Psoas muscle (tissue), 8 donors: ENCODE measurements at regions of chr22 and their contacts with region 1.

Region 1: DNA sequence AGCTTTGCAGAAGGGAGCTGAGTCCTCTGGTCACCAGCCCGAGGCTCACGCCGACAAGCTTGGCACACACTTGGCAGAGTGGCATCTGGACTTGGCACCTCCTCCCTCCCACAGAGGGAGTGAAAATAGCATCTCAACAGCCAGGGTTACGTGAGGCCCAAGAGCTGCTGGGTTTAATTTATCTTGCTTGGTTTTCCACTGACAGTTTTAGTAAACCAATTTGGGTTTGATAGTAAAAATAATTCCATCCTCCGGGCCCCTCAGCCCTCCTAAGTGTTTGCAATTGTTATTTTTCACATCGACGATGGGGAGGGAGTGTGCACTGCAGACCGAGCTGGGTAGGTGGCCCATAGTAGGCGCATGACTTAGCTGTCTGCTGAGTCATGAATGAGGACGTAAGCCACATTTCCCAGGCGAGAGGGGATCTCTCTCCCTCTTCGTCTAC is 107.6 kb upstream of the ASPHD2 start:
- DNase-seq: peak; percentile 49 to 90
- ATAC-seq: peak; percentile 86 to 89 (median 88)
- H3K4me3 ChIP-seq: no peak overlapping the region
- H3K27ac ChIP-seq: peak overlapping the region; percentile 91
- H3K4me1 ChIP-seq: peaks cover 14% of the 10 kb centered on the region
- H3K27me3 ChIP-seq: no peaks in the 10 kb centered on the region
- CTCF ChIP-seq: no peak

Region 2: DNA sequence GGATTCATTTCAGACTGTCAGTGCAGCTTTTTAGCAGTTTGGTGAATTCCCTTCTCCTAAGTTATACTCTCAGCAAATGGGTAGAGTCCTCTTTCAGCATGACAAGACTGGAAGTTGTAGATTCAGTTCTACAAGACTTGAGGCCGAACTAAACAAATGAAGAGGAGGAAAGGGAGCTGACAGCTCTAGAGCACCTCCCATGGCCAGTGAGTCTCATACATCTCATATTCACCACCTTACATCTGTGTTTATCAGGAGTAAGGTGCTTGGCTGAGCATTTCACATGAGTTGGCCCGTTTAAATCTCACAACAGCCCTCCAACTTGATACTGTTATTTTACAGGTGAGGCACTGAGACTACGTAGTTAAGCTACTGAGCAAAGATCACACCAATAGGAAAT is 121.8 kb before region 1 on chr22:
- intact Hi-C with region 1: loop called in 1 of 2 experiments (anchors 5 kb)
- DNase-seq: no peak
- ATAC-seq: no peak
- H3K4me3 ChIP-seq: no peak overlapping the region
- H3K27ac ChIP-seq: no peak overlapping the region
- H3K4me1 ChIP-seq: peaks cover 3% of the 10 kb centered on the region
- H3K27me3 ChIP-seq: no peaks in the 10 kb centered on the region
- CTCF ChIP-seq: no peak

Region 3: DNA sequence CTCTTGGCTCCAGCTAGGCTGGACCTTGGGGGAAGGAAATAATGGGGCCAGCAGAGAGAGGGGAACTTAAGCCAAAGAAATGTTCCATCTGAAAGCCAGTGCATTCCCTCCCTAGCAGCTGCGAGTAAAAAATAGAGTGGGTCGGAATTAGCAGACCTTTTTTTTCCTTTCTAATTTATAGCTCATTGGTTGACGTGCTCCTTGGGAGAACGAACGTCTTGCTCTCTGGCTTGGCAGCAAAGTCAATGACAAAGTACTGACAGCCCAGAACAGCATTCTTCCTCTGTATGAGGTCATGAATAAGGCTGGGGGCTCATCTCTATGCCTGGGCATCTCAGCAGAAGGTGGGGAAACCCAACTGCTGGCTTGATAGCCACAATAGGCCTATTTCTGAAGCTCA is 87.2 kb before region 1 on chr22:
- intact Hi-C with region 1: loop called (anchors 1 to 5 kb)
- DNase-seq: no peak
- ATAC-seq: peak; percentile 65 to 87 (median 78)
- H3K4me3 ChIP-seq: no peak overlapping the region
- H3K27ac ChIP-seq: peak overlapping the region; percentile 42
- H3K4me1 ChIP-seq: peaks cover 38% of the 10 kb centered on the region
- H3K27me3 ChIP-seq: no peaks in the 10 kb centered on the region
- CTCF ChIP-seq: no peak

Region 4: GRCh38 chr22:26360169-26360885 is 38.8 kb after region 1 on chr22:
- intact Hi-C with region 1: no loop called
- DNase-seq: peak; percentile 39 to 67
- ATAC-seq: peak; percentile 45 to 77 (median 58)
- H3K4me3 ChIP-seq: peak overlapping the region; percentile 15
- H3K27ac ChIP-seq: no peak overlapping the region
- H3K4me1 ChIP-seq: peaks cover 8% of the 10 kb centered on the region
- H3K27me3 ChIP-seq: no peaks in the 10 kb centered on the region
- CTCF ChIP-seq: peak; percentile 95